CD8-positive, alpha-beta memory T cell (primary cell): ENCODE measurements at regions of chr16 and their contacts with region 1.

Region 1: GRCh38 chr16:3074860-3075522 is 9.6 kb downstream of the IL32 start:
- DNase-seq: peak; percentile 68 to 94 (median 90)
- H3K4me3 ChIP-seq: peak overlapping the region; percentile 19
- H3K4me3 Mint-ChIP-seq: peak overlapping the region; percentile 58 to 91 (median 79)
- H3K27ac ChIP-seq: peak overlapping the region; percentile 45
- H3K27ac Mint-ChIP-seq: peak overlapping the region; percentile 88 to 97 (median 95)
- H3K4me1 ChIP-seq: peaks cover 94% of the 10 kb centered on the region
- H3K4me1 Mint-ChIP-seq: peaks cover 89 to 97% (median 94%) of the 10 kb centered on the region in 3 donors
- H3K27me3 ChIP-seq: no peaks in the 10 kb centered on the region
- H3K27me3 Mint-ChIP-seq: no peaks in the 10 kb centered on the region

Region 2: GRCh38 chr16:3087243-3088235 is 12.5 kb after region 1 on chr16:
- CTCF ChIA-PET with region 1: interaction called, 19 read pairs
- POLR2A ChIA-PET with region 1: interaction called, 3 read pairs
- DNase-seq: no peak
- H3K4me3 ChIP-seq: no peak overlapping the region
- H3K4me3 Mint-ChIP-seq: peak overlapping the region in 6 of 7 donors; percentile 25 to 88 (median 62)
- H3K27ac ChIP-seq: no peak overlapping the region
- H3K27ac Mint-ChIP-seq: peak overlapping the region in 6 of 8 donors; percentile 57 to 97 (median 74)
- H3K4me1 ChIP-seq: peaks cover 32% of the 10 kb centered on the region
- H3K4me1 Mint-ChIP-seq: peaks cover 35 to 64% (median 41%) of the 10 kb centered on the region in 3 donors
- H3K27me3 ChIP-seq: no peaks in the 10 kb centered on the region
- H3K27me3 Mint-ChIP-seq: no peaks in the 10 kb centered on the region

Region 3: DNA sequence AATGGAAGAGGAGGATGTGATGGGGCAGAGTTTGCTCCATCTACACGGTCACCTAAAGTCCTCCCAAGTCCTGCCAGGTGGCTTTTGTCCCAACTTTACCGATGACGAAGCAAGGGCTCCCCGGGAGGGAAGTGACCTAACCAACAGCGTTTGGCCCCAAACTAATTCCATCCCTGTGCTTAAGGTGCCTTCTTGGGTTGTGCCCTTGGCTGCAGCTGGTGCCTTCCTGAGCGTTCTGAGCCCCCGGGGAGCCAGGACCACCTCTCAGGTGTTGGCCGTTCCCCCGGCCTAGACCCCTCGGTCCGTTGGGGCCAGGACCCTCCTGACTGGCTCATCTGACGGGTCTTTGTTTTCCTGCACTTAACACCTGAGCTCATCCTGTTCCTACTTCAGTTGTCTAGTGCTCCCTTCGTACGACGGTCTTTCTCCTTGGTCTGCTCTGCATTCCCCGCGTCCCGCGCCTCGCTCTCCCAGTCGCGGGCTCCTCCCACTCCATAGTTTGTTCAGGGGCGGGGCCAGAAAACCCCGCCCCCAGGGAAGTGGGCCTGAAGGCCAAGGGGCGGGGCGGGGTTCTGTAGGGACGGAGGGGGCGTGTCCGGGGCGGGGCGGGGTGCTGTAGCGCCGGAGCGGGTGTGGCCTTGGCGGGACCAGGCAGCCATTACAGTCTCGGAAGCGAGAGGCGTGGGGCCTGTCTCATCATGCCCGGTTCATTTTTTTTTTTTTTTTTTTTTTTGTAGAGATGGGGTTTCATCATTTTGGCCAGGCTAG is 24.9 kb after region 1 on chr16:
- CTCF ChIA-PET with region 1: interaction called, 69 read pairs
- POLR2A ChIA-PET with region 1: interaction called, 27 read pairs
- DNase-seq: peak; percentile 78 to 91 (median 87)
- H3K4me3 ChIP-seq: peak overlapping the region; percentile 32
- H3K4me3 Mint-ChIP-seq: peak overlapping the region; percentile 71 to 87 (median 84)
- H3K27ac ChIP-seq: no peak overlapping the region
- H3K27ac Mint-ChIP-seq: peak overlapping the region; percentile 27 to 94 (median 90)
- H3K4me1 ChIP-seq: peaks cover 37% of the 10 kb centered on the region
- H3K4me1 Mint-ChIP-seq: peaks cover 39 to 57% (median 41%) of the 10 kb centered on the region in 3 donors
- H3K27me3 ChIP-seq: no peaks in the 10 kb centered on the region
- H3K27me3 Mint-ChIP-seq: no peaks in the 10 kb centered on the region

Region 4: DNA sequence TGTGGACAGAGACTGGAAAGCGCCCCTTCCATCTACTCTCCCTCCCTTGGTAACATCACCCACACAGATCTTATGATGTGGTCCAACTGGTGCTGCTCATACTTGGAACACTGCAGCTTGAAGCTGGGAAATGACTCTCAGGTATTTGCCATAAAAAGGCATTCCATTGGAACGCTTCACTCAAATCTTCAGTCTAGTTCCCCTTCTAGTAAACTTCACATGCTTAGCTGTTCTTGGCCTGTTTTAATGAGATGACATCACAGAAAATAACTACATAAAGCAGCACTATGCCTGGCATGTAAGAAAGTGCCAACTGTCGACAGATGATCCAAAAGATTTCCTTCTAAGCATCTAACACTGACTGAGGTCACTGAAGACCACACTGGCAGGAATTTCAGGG is 217.6 kb after region 1 on chr16:
- CTCF ChIA-PET with region 1: no interaction called
- POLR2A ChIA-PET with region 1: no interaction called
- DNase-seq: no peak
- H3K4me3 ChIP-seq: no peak overlapping the region
- H3K4me3 Mint-ChIP-seq: no peak overlapping the region
- H3K27ac ChIP-seq: no peak overlapping the region
- H3K27ac Mint-ChIP-seq: no peak overlapping the region
- H3K4me1 ChIP-seq: no peaks in the 10 kb centered on the region
- H3K4me1 Mint-ChIP-seq: peaks cover 5 to 12% (median 7%) of the 10 kb centered on the region in 3 donors
- H3K27me3 ChIP-seq: no peaks in the 10 kb centered on the region
- H3K27me3 Mint-ChIP-seq: no peaks in the 10 kb centered on the region